Activated naive CD4-positive, alpha-beta T cell treated with anti-CD3 and anti-CD28 coated beads for 36 hours (primary cell): ENCODE measurements at regions of chr11 and their contacts with region 1.

Region 1: DNA sequence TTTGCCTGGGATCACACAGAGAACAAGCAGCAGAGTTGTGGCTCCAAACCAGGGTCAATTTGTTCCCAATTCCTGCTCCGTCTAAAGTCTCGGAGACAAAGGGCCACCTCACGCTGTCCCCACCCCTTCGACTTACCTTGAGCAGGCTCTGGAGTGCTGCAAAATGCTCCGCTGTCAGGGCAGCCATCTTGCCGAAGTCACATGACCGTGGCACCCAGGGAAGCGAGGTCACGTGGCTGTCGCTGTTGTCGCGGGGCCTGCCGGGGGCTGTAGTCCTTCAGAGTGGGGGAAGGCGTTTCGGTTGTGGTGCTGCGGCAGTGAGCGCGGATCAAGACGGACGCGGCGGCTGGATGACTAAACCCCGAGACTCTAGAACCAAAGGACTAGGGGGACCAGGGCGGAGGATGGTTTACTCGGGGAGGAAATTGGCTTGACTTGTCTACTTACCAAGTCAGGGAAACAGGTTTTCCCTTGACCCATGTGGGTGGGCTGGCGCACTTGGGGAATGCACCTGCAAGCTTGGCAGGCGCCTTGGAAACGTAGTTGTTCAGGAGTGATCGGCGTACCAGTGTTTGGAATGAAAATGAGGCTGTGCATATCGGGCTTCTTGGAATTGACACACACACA is at the start of gene COMMD9:
- DNase-seq: peak; percentile 98
- H3K4me3 Mint-ChIP-seq: peak within 1 kb of the TSS; percentile 91
- H3K27ac Mint-ChIP-seq: peak within 1 kb of the TSS; percentile 78
- H3K4me1 Mint-ChIP-seq: peaks cover 34% of the 10 kb centered on the region
- H3K27me3 Mint-ChIP-seq: no peaks in the 10 kb centered on the region
- total RNA-seq, gene COMMD9: 28.9 to 30.9 TPM

Region 2: DNA sequence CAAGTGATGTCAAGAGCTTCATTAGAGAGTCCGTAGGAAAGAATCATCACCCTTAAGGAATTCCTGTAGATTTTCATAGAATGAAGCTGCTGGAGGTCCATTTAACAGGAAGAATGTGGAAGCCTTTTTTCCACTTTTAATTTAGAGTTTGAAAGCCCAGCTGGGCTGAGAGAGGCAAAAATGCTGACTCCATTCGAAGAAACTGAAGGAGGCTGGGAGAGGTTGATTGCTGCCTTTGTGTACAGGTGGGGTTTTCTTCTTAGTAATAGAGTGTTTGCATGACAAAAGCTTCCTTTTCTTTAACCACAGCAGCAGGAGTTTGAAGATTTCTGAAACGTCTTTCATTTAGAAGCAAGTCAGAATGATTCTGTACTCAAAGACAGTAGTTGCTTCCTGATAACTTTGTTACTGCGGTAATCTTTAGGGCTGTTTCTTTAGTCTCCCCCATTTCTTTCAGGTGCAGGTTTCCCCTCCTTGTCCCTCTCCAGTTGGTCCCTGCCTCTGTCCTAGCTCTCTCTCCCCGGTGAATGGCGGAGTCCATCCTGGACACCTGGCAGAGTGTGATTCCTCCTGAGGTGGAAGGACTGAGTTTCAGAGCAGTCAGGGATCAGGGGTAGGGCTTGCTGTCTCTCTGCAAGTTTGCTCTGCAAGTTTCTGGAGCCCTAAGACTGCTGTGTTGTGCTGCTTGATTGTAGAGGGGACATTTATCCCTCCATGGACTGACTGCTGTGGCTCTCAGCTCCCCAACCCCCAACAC is 179.3 kb before region 1 on chr11:
- CTCF ChIA-PET with region 1: no interaction called
- intact Hi-C with region 1: no loop called
- DNase-seq: no peak
- H3K4me3 Mint-ChIP-seq: no peak overlapping the region
- H3K27ac Mint-ChIP-seq: no peak overlapping the region
- H3K4me1 Mint-ChIP-seq: no peaks in the 10 kb centered on the region
- H3K27me3 Mint-ChIP-seq: peaks cover 2% of the 10 kb centered on the region

Region 3: DNA sequence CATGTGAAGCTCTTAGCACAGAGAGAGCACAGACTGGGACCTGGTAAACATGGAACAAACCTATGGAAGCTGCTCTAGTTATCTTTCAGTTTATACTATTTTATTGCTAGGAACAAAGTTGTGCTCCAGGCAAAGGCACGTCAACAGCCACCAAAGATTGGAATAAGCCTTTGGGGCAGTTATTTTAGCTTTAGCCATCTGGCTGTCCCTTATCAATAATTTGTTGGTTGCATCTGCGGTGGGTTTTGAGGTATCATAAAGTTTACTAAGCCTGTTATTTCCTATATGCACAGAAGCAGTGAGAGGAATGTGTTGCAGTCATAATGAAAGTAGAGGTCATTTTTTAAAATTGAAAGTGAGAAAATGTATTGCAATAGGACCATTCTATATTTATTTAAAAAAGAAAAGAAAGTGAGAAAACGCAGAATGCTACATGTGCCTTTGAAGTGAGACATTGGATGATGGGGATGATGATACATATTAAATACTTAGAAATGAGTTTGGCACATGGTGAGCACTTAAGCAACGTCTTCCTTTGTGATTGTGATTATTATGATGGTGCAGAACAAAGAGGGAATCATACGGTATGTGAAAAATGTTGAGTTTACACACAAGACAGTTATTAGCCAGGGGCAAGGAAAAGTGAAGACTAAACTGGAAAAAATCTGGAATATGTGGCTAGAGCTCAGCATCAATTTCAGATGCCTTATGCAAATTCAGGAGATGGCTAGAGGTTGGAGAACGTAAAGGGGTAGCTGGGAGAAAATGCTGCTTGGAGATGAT is 65.1 kb after region 1 on chr11:
- CTCF ChIA-PET with region 1: interaction called, 5 read pairs
- intact Hi-C with region 1: loop called (anchors 1 kb)
- DNase-seq: no peak
- H3K4me3 Mint-ChIP-seq: no peak overlapping the region
- H3K27ac Mint-ChIP-seq: peak overlapping the region; percentile 16
- H3K4me1 Mint-ChIP-seq: peaks cover 49% of the 10 kb centered on the region
- H3K27me3 Mint-ChIP-seq: peaks cover 18% of the 10 kb centered on the region

Region 4: GRCh38 chr11:36478700-36479329 is 189.5 kb after region 1 on chr11:
- CTCF ChIA-PET with region 1: interaction called, 109 read pairs
- intact Hi-C with region 1: loop called (anchors 1 kb)
- DNase-seq: peak; percentile 62
- H3K4me3 Mint-ChIP-seq: no peak overlapping the region
- H3K27ac Mint-ChIP-seq: no peak overlapping the region
- H3K4me1 Mint-ChIP-seq: peaks cover 2% of the 10 kb centered on the region
- H3K27me3 Mint-ChIP-seq: no peaks in the 10 kb centered on the region

Region 5: DNA sequence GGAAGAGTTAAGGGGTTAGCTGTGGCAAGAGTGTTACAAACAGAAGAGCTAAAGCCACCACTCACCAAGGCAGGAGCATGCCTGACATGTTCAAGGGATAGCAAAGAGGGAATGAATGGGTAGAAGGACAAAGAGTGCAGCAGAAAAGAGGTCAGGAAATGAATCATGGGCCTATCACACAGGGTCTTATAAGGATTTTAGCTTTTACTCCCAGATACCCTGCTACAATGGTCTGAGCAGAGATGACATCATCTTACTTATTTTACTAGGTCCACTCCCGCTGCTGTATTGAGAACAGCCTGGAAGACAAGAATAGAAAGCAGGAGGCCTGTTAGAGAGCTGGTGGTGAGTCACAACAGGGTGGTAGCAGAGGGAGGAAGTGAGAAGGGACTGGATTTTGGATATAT is 211.0 kb after region 1 on chr11:
- CTCF ChIA-PET with region 1: interaction called, 98 read pairs
- intact Hi-C with region 1: no loop called
- DNase-seq: no peak
- H3K4me3 Mint-ChIP-seq: no peak overlapping the region
- H3K27ac Mint-ChIP-seq: peak overlapping the region; percentile 74
- H3K4me1 Mint-ChIP-seq: peaks cover 23% of the 10 kb centered on the region
- H3K27me3 Mint-ChIP-seq: no peaks in the 10 kb centered on the region

Region 6: DNA sequence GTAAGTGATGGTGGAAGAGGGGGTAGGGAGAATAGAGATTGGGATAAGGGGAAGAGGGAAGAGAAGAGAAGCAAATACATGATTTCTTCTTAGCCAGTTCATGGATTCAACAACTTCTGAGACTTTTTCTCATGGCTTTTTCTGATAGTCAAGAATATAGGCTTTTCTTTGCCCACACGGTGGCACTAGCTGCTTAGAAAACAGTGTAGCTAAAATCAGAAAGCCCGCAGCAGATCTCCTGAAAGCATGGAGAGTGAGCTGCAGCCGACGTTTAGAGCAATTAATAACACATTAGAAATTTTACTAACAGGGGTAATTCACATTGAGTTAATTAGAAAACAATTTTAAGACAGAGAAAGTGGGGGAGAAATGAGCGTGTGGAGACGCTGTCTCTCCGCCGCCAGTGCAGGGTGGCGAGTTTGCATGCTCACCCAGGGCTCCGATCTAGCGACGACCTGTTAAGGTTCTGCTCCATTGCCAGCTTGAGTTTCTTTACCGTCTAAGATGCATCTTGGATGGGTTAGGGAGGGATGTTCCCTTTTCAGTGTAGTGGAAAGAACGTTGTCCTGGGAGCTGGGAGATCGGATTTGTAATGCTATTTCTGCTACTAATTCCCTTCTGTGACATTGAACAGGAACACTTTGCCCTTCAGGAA is 275.2 kb after region 1 on chr11:
- CTCF ChIA-PET with region 1: interaction called, 3 read pairs
- intact Hi-C with region 1: loop called (anchors 1 kb)
- DNase-seq: peak; percentile 65
- H3K4me3 Mint-ChIP-seq: peak overlapping the region; percentile 47
- H3K27ac Mint-ChIP-seq: no peak overlapping the region
- H3K4me1 Mint-ChIP-seq: peaks cover 2% of the 10 kb centered on the region
- H3K27me3 Mint-ChIP-seq: peaks cover 24% of the 10 kb centered on the region

Region 7: DNA sequence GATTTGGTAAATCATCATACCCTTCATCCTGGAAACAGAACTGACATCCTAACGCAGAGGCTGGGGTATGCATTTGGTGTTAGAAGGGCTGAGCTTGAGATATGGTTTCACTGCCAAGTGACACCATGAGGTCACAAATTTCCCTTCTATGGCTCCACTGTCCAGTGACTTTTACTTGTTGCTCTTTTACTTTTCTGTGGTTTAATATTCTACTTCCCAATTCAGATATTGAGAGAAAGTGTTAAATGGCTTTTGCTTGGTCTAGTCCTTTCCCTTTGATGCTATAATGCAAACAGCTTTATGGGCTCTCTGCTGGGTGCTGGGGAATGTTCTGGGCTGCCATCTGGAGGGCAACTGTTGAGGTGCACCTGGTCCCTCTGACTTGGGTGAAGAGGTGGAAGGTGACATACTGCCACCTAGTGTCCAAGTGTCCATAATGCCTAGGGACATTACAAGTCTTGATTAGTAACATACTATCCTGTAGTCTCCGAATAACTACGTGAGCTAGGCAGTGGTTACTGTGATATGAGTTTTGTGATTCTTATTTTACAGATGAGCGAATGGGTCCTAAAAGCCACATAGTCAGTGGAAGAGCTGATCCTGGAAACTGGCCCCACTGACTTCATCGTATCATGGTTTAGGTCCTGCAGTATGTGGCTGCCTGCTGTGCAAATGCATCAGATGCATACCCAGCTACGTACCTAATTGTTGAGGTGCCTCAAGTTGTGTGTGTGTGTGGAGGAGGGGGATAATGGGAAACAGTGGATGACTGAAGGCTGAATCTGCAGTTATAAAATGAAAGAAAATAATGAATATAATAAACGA is 457.8 kb after region 1 on chr11:
- CTCF ChIA-PET with region 1: interaction called, 10 read pairs
- intact Hi-C with region 1: loop called (anchors 1 kb)
- DNase-seq: peak; percentile 92
- H3K4me3 Mint-ChIP-seq: no peak overlapping the region
- H3K27ac Mint-ChIP-seq: peak overlapping the region; percentile 25
- H3K4me1 Mint-ChIP-seq: no peaks in the 10 kb centered on the region
- H3K27me3 Mint-ChIP-seq: peaks cover 24% of the 10 kb centered on the region

Region 8: DNA sequence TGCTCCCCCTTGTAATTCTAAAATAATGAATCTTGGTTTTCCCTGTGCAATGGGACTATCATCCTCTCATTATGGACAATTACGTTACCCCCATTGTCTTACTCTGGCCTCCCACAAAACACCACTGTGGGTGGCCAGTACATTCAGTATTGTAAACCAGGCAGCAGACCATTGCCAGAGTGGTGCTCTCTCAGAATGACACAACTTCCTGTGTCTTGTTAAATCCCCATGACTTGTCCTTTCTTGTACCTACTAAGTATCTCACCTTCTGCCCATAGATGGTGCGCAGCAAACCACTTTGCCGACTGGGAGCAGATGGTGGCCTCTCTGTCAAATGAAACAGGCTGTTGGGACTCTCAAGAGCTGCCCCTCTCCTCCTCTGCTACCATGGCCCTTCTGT is 595.8 kb after region 1 on chr11:
- CTCF ChIA-PET with region 1: no interaction called
- intact Hi-C with region 1: no loop called
- DNase-seq: no peak
- H3K4me3 Mint-ChIP-seq: no peak overlapping the region
- H3K27ac Mint-ChIP-seq: no peak overlapping the region
- H3K4me1 Mint-ChIP-seq: no peaks in the 10 kb centered on the region
- H3K27me3 Mint-ChIP-seq: no peaks in the 10 kb centered on the region